AG04450 (cell line): ENCODE measurements at regions of chr13 and their contacts with region 1.

Region 1: DNA sequence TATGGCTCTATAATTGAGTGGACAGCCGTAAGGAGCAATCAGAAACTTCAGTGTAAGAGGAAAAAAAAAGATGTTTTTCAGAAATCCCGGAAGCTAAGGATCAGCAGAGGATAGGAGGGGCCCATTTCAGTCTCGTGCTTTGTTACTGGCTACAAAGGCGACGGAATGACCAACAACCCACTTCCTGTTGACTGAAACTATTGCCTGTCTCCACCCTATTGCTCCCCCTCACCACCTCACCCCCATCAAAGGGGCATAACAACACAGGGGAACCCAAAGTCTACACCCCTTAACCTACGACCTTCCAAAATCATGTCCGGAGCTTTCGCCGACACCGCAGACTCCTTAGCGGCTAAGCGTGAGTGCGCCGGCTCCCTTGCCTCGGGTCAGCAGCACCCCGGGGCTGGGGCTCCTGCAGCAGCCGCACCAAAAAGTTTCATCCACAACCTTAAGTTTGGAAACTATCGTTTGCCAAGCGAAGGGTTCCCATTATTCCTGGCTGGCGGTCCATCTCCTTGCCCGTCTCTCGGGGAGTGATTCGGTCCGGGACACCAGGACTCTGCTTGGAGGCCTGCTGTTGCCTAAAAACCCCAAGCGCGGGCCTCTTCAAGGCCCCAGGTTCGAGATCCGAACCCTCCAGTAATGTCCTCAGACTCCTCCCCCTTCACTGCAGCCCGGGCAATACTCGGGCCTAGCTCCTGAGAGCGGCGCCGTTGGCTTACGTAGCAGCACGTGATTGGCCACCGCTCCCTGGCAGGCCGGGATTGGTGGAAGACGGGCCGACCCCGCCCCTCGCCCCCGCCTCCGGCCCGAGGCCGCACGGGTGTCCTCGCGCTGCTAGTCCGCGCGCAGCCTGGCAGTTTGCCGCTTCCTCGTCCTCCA is at the start of gene TPP2:
- DNase-seq: peak; percentile 97
- H3K4me3 ChIP-seq: peak within 1 kb of the TSS; percentile 93
- H3K27ac ChIP-seq: peak within 1 kb of the TSS; percentile 100
- H3K27me3 ChIP-seq: no peaks in the 10 kb centered on the region
- CTCF ChIP-seq: no peak
- polyA plus RNA-seq, gene TPP2: 40.9 and 49.8 TPM in 2 replicates

Region 2: GRCh38 chr13:102580552-102581169 is 15.7 kb before region 1 on chr13:
- CTCF ChIA-PET with region 1: interaction called, 72 read pairs
- POLR2A ChIA-PET with region 1: no interaction called
- DNase-seq: peak; percentile 50
- H3K4me3 ChIP-seq: no peak overlapping the region
- H3K27ac ChIP-seq: no peak overlapping the region
- H3K27me3 ChIP-seq: peaks cover 9% of the 10 kb centered on the region
- CTCF ChIP-seq: peak; percentile 80

Region 3: DNA sequence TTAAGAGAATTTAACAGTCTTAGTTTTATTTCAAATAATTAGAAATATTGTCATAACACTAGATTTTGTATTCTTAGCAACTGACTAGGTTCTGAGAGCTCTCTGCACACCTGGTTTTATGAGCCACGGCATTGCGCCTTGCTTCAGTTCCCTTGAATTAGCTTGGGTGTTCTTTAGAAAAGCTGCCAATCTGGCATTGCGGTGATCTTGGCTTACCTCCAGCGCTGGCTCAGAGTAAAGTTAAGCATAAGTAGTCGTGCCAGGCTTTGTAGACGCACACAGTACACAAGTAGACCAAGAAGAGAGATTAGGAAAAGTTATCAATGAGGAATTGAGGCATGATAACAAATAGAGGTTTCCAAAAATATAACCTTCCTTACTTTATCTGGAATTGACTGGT is 46.1 kb after region 1 on chr13:
- CTCF ChIA-PET with region 1: interaction called, 11 read pairs
- POLR2A ChIA-PET with region 1: no interaction called
- DNase-seq: no peak
- H3K4me3 ChIP-seq: no peak overlapping the region
- H3K27ac ChIP-seq: no peak overlapping the region
- H3K27me3 ChIP-seq: no peaks in the 10 kb centered on the region
- CTCF ChIP-seq: no peak

Region 4: GRCh38 chr13:102724923-102725322 is 128.5 kb after region 1 on chr13:
- CTCF ChIA-PET with region 1: interaction called, 20 read pairs
- POLR2A ChIA-PET with region 1: no interaction called
- DNase-seq: no peak
- H3K4me3 ChIP-seq: no peak overlapping the region
- H3K27ac ChIP-seq: no peak overlapping the region
- H3K27me3 ChIP-seq: peaks cover 3% of the 10 kb centered on the region
- CTCF ChIP-seq: peak; percentile 36; the same call in 1 of the 2 replicates

Region 5: DNA sequence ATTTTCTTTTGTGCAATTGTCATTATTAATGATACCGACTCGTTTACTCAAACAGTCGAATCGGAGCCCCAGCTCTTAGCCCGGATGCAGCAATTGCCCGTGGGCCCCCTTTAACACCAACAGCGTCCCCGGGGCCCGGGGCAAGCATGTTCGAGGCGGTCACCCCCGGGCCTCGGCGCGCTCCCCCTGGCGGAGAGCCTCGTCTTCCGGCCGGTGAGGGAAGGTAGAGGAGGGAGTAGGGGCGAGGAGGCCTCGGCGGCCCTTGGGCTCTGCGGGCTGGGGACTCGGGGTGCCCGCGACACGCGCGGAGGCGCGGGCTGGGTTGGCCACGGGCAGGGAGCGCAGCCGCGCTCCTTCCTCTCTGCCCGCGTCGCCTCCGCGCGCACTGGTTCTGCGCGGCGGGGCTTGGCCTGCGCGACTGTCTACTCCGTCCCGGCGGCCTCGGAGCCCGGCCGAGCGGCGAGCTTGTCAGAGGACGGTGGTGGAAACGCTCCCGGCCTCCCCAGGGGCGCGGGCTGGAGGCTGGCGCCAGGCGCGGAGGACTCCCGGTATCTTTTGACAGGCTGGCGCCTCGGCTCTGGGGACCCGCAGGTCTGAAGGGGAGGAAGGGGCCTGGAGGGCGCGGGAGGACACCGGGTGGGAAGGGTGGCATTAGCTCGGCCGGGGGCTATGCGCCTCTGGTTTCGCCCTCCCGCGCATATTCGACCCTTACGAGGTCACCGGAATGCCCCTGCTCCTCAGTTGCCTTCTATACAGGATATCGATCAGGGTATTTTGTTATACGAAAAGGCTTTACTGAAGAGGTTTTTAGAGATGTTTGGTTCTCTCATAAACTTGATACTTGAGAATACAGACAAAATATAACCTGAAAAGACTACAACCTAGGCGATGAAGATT is 204.0 kb after region 1 on chr13:
- CTCF ChIA-PET with region 1: interaction called, 17 read pairs
- POLR2A ChIA-PET with region 1: interaction called, 6 read pairs
- DNase-seq: peak; percentile 26
- H3K4me3 ChIP-seq: peak overlapping the region; percentile 87
- H3K27ac ChIP-seq: peak overlapping the region; percentile 68
- H3K27me3 ChIP-seq: no peaks in the 10 kb centered on the region
- CTCF ChIP-seq: peak; percentile 81